ENCODE measurements at regions of chr17 and their contacts with region 1.

Region 1: GRCh38 chr17:75380315-75380714 is 25.2 kb downstream of the GRB2 start:
- DNase-seq: no peak

Region 2: GRCh38 chr17:75352079-75352569 is 28.2 kb before region 1 on chr17:
- intact Hi-C with region 1: loop called (anchors 1 kb)
- DNase-seq: no peak

Measured in posterior cingulate gyrus (tissue), 11 donors.